ENCODE measurements at regions of chr1 and their contacts with region 1.

Region 1: DNA sequence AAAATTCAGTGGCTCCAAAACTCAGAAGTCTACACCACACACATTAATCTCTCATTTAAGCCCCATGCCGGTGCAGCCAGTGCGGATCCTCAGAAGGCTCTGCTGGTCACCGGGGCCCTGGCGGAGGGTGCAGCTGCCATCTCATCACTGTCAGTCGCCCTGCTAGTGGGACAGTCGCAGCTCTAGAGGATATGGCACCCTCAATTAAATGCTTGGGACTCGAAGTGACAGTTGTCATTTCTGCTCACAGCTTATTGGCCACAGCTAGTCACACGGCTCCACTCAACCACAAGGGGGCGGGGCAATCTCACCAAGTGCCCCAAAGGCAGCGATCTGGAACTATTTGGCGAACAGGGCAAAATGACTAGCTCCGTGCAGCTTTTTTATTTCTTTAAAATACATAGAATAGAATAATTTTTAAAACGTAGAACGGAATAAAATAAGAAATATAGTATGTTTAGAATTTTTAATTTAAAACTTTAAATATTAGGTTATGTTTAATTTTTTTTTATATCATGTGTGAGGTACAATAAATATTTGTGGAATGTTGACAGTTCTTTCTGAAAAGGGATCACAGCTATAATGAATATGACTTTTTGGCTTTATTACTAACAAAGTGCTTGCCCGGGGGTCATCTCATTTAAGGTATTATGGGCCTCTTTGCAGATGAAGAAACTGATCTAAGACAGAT is 8.0 kb upstream of the MAN1C1 start:
- DNase-seq: peak; percentile 91
- ATAC-seq: peak; percentile 93

Region 2: GRCh38 chr1:25239681-25240541 is 368.7 kb before region 1 on chr1:
- intact Hi-C with region 1: no loop called
- DNase-seq: peak; percentile 93
- ATAC-seq: peak; percentile 91

Region 3: GRCh38 chr1:25796811-25797458 is 188.3 kb after region 1 on chr1:
- intact Hi-C with region 1: loop called (anchors 5 kb)
- DNase-seq: peak; percentile 92
- ATAC-seq: peak; percentile 36

Measured in left ventricle myocardium superior (tissue), 1 donor.